Common myeloid progenitor, CD34-positive (primary cell): ENCODE measurements at regions of chr12 and their contacts with region 1.

Region 1: DNA sequence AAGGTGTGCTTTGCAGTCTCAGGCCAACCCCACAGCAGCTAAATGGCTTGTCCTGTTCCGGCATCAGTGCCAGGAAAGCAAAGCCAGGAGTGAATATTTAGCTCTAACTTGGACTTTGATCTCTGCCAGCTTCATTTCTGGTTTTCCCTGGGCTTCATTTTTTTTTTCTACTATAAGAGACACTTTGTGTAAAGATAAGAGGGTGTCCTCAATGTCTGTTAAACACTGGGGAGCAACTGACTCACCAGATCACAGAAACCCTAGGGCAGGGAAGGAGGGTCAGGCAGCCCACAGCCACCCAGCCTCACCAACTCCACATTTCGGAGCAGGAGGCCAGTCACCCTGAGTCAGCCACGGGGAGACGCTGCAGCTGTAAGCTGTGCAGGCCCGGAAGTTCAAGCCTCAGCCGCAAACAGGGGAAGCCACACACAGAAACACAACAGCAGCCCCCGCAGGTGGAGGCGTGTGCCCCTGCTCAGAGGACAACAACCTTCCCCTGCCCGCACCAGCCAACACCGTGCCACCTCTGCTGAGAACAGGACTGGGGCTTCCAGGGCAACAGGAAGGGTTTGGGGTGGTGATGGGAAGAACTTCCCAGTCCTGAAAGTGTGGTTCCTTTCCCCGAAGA is 6.3 kb downstream of the TNFRSF1A start:
- DNase-seq: peak; percentile 87 to 96 (median 94)
- H3K4me3 ChIP-seq: peak overlapping the region in 6 of 7 experiments; percentile 65 to 99 (median 98)
- H3K27ac ChIP-seq: peak overlapping the region; percentile 74 to 96
- H3K4me1 ChIP-seq: peaks cover 30 to 81% (median 78%) of the 10 kb centered on the region in 4 experiments
- H3K27me3 ChIP-seq: no peaks in the 10 kb centered on the region

Region 2: DNA sequence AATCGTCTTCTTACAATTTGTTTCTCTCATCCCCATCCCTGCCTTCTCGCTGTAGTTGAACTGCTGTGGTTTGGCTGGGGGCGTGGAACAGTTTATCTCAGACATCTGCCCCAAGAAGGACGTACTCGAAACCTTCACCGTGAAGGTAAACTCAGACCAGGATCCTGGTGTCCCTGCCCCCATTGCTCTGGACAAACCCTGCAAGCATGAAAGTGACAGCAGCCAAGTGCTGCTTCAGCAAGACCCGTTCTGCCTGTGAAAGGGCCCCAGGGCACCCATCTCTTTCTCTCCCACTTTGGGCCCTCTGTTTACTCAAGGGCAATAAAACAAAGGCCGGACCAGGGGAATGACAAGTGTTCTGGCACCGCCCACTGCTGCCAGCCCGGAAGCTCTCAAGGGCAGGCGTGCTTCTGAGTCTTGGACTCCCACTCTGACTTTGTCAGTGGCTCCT is 100.1 kb before region 1 on chr12:
- CTCF ChIA-PET with region 1: no interaction called
- POLR2A ChIA-PET with region 1: no interaction called
- DNase-seq: no peak
- H3K4me3 ChIP-seq: no peak overlapping the region
- H3K27ac ChIP-seq: no peak overlapping the region
- H3K4me1 ChIP-seq: peaks cover 2 to 48% (median 33%) of the 10 kb centered on the region in 4 experiments
- H3K27me3 ChIP-seq: peaks cover 0 to 2% (median 0%) of the 10 kb centered on the region in 5 experiments

Region 3: GRCh38 chr12:6376079-6376869 is 40.7 kb after region 1 on chr12:
- CTCF ChIA-PET with region 1: interaction called, 73 read pairs
- POLR2A ChIA-PET with region 1: interaction called, 5 read pairs
- DNase-seq: peak in 1 of 3 donors; percentile 37
- H3K4me3 ChIP-seq: peak overlapping the region in 2 of 7 experiments; percentile 12 to 46
- H3K27ac ChIP-seq: no peak overlapping the region
- H3K4me1 ChIP-seq: peaks cover 4 to 77% (median 51%) of the 10 kb centered on the region in 4 experiments
- H3K27me3 ChIP-seq: no peaks in the 10 kb centered on the region